IMR-90 (cell line): ENCODE measurements at regions of chr14 and their contacts with region 1.

Region 1: GRCh38 chr14:96297000-96297399 is 41.0 kb downstream of the BDKRB1 start:
- DNase-seq: peak; percentile 31
- ATAC-seq: peak; percentile 46; the same call in 1 of the 2 replicates
- H3K4me3 ChIP-seq: no peak overlapping the region
- H3K27ac ChIP-seq: no peak overlapping the region
- H3K4me1 ChIP-seq: peaks cover 5% of the 10 kb centered on the region; the same call in 1 of the 2 replicates
- H3K27me3 ChIP-seq: no peaks in the 10 kb centered on the region
- CTCF ChIP-seq: peak; percentile 60
- POLR2A ChIP-seq: no peak
- RAD21 ChIP-seq: peak; percentile 55

Region 2: GRCh38 chr14:96016501-96017160 is 280.4 kb before region 1 on chr14:
- CTCF ChIA-PET with region 1: interaction called, 10 read pairs
- POLR2A ChIA-PET with region 1: no interaction called
- dilution Hi-C with region 1: no loop called
- in situ Hi-C with region 1: no loop called
- intact Hi-C with region 1: no loop called
- DNase-seq: peak; percentile 12
- ATAC-seq: peak; percentile 92
- H3K4me3 ChIP-seq: no peak overlapping the region
- H3K27ac ChIP-seq: no peak overlapping the region
- H3K4me1 ChIP-seq: no peaks in the 10 kb centered on the region
- H3K27me3 ChIP-seq: peaks cover 8% of the 10 kb centered on the region
- CTCF ChIP-seq: no peak
- POLR2A ChIP-seq: no peak
- RAD21 ChIP-seq: no peak

Region 3: DNA sequence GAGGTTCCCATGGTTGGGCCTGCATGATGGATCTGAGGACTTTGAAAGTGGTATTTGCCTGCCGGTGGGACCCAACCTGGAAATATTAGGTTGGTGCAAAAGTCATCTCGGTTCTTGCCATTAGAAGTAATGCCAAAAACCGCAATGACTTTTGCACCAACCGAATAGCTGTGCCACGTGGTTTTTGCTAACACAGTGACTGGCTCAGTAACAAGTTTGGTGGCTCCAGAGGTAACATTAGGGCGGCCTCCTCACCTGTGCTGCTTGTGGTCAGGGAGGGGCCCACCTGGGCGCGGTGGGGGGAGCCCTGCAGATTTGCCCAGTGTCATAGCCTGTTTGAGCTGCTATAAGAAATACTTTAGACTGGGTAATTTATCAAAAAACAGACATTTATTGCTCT is 90.5 kb before region 1 on chr14:
- CTCF ChIA-PET with region 1: no interaction called
- POLR2A ChIA-PET with region 1: no interaction called
- dilution Hi-C with region 1: no loop called
- in situ Hi-C with region 1: no loop called
- intact Hi-C with region 1: no loop called
- DNase-seq: no peak
- ATAC-seq: no peak
- H3K4me3 ChIP-seq: peak overlapping the region; percentile 88
- H3K27ac ChIP-seq: peak overlapping the region; percentile 97
- H3K4me1 ChIP-seq: peaks cover 20% of the 10 kb centered on the region
- H3K27me3 ChIP-seq: no peaks in the 10 kb centered on the region
- CTCF ChIP-seq: no peak
- POLR2A ChIP-seq: no peak; the same call in 1 of the 2 replicates
- RAD21 ChIP-seq: no peak